GM12878 (cell line): ENCODE measurements at regions of chr14 and their contacts with region 1.

Region 1: DNA sequence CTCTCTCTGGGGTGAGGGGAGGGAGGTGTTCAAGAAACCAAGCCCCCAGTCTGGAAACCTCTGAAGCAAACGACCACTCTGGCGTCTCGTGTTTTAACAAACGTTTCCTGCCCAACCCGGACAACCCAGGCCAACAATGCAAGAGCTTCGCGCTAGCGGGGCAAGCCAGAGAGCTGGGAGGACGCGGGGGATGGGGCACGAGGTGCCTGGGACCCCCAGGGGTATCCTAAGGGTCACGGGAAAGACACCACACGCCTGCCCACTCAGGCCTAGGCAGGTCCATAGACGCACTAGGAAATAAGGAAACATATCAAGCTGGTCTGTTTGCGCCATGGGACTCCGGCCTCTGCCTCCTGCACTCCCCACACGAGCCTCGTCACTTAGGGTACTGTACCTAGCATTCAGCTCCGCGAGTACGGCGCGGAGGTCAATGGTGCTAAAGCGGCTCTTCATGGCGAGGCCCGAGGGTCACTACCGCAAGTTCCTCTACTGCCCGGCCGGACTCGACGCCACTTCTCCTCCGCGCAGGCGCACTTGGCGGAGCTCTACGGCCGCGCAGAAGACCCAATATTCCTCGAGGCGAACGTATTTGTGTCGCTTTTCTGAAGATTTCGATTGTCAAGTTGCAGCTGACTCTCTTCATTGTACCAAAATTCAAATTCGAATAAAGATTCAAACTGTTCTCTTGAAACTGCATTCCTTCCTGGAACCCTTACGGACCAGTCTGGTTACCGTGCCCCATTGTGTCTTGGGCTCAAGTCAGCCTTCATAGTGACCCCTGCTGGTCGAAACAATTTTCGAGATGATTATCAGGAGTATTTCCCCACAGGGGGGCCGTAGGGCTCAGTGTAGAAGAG is at the start of gene NEMF:
- DNase-seq: peak; percentile 92
- ATAC-seq: peak; percentile 89
- H3K4me3 ChIP-seq: peak within 1 kb of the TSS; percentile 97
- H3K27ac ChIP-seq: peak within 1 kb of the TSS; percentile 88
- H3K4me1 ChIP-seq: peaks cover 1% of the 10 kb centered on the region; the same call in 1 of the 2 replicates
- H3K27me3 ChIP-seq: no peaks in the 10 kb centered on the region
- CTCF ChIP-seq: peak; percentile 67 to 95 (median 81)
- EP300 ChIP-seq: no peak
- POLR2A ChIP-seq: peak; percentile 89
- RAD21 ChIP-seq: peak; percentile 57
- polyA plus RNA-seq, gene NEMF: 36.8 to 62.6 TPM

Region 2: GRCh38 chr14:49754570-49755097 is 97.9 kb before region 1 on chr14:
- CTCF ChIA-PET with region 1: no interaction called
- POLR2A ChIA-PET with region 1: no interaction called
- RAD21 ChIA-PET with region 1: no interaction called
- SMC1A ChIA-PET with region 1: no interaction called
- in situ Hi-C with region 1: no loop called
- intact Hi-C with region 1: no loop called
- DNase-seq: no peak
- ATAC-seq: no peak
- H3K4me3 ChIP-seq: no peak overlapping the region
- H3K27ac ChIP-seq: no peak overlapping the region
- H3K4me1 ChIP-seq: no peaks in the 10 kb centered on the region
- H3K27me3 ChIP-seq: no peaks in the 10 kb centered on the region
- CTCF ChIP-seq: no peak
- EP300 ChIP-seq: no peak
- POLR2A ChIP-seq: no peak
- RAD21 ChIP-seq: no peak

Region 3: GRCh38 chr14:49828640-49829039 is 23.9 kb before region 1 on chr14:
- CTCF ChIA-PET with region 1: interaction called, 11 read pairs
- POLR2A ChIA-PET with region 1: no interaction called
- RAD21 ChIA-PET with region 1: no interaction called
- SMC1A ChIA-PET with region 1: interaction called, 13 read pairs
- in situ Hi-C with region 1: no loop called
- intact Hi-C with region 1: no loop called
- DNase-seq: no peak
- ATAC-seq: no peak
- H3K4me3 ChIP-seq: no peak overlapping the region
- H3K27ac ChIP-seq: no peak overlapping the region
- H3K4me1 ChIP-seq: no peaks in the 10 kb centered on the region
- H3K27me3 ChIP-seq: no peaks in the 10 kb centered on the region
- CTCF ChIP-seq: no peak
- EP300 ChIP-seq: no peak
- POLR2A ChIP-seq: no peak
- RAD21 ChIP-seq: no peak

Region 4: GRCh38 chr14:50008562-50009350 is 156.2 kb after region 1 on chr14:
- CTCF ChIA-PET with region 1: interaction called, 7 read pairs
- POLR2A ChIA-PET with region 1: interaction called, 10 read pairs
- RAD21 ChIA-PET with region 1: interaction called, 3 read pairs
- SMC1A ChIA-PET with region 1: no interaction called
- in situ Hi-C with region 1: no loop called
- intact Hi-C with region 1: no loop called
- DNase-seq: no peak
- ATAC-seq: peak; percentile 60
- H3K4me3 ChIP-seq: no peak overlapping the region
- H3K27ac ChIP-seq: no peak overlapping the region
- H3K4me1 ChIP-seq: peaks cover 14% of the 10 kb centered on the region
- H3K27me3 ChIP-seq: no peaks in the 10 kb centered on the region
- CTCF ChIP-seq: no peak
- EP300 ChIP-seq: no peak
- POLR2A ChIP-seq: no peak
- RAD21 ChIP-seq: no peak

Region 5: GRCh38 chr14:50030036-50030435 is 177.5 kb after region 1 on chr14:
- CTCF ChIA-PET with region 1: no interaction called
- POLR2A ChIA-PET with region 1: no interaction called
- RAD21 ChIA-PET with region 1: no interaction called
- SMC1A ChIA-PET with region 1: no interaction called
- in situ Hi-C with region 1: no loop called
- intact Hi-C with region 1: no loop called
- DNase-seq: no peak
- ATAC-seq: no peak
- H3K4me3 ChIP-seq: no peak overlapping the region
- H3K27ac ChIP-seq: no peak overlapping the region
- H3K4me1 ChIP-seq: peaks cover 5% of the 10 kb centered on the region; the same call in 1 of the 2 replicates
- H3K27me3 ChIP-seq: no peaks in the 10 kb centered on the region
- CTCF ChIP-seq: no peak
- EP300 ChIP-seq: no peak
- POLR2A ChIP-seq: no peak
- RAD21 ChIP-seq: no peak

Region 6: GRCh38 chr14:50045039-50045711 is 192.6 kb after region 1 on chr14:
- CTCF ChIA-PET with region 1: no interaction called
- POLR2A ChIA-PET with region 1: no interaction called
- RAD21 ChIA-PET with region 1: no interaction called
- SMC1A ChIA-PET with region 1: no interaction called
- in situ Hi-C with region 1: no loop called
- intact Hi-C with region 1: no loop called
- DNase-seq: peak; percentile 54
- ATAC-seq: peak; percentile 90
- H3K4me3 ChIP-seq: no peak overlapping the region
- H3K27ac ChIP-seq: peak overlapping the region; percentile 50
- H3K4me1 ChIP-seq: peaks cover 42% of the 10 kb centered on the region
- H3K27me3 ChIP-seq: no peaks in the 10 kb centered on the region
- CTCF ChIP-seq: no peak
- EP300 ChIP-seq: no peak
- POLR2A ChIP-seq: peak; percentile 55; the same call in 1 of the 2 replicates
- RAD21 ChIP-seq: peak; percentile 9; the same call in 1 of the 2 replicates

Region 7: GRCh38 chr14:50099335-50099734 is 246.8 kb after region 1 on chr14:
- CTCF ChIA-PET with region 1: interaction called, 69 read pairs
- POLR2A ChIA-PET with region 1: interaction called, 4 read pairs
- RAD21 ChIA-PET with region 1: interaction called, 24 read pairs
- SMC1A ChIA-PET with region 1: interaction called, 33 read pairs
- in situ Hi-C with region 1: no loop called
- intact Hi-C with region 1: loop called (anchors 2 kb)
- DNase-seq: no peak
- ATAC-seq: no peak
- H3K4me3 ChIP-seq: no peak overlapping the region
- H3K27ac ChIP-seq: no peak overlapping the region
- H3K4me1 ChIP-seq: peaks cover 12% of the 10 kb centered on the region
- H3K27me3 ChIP-seq: no peaks in the 10 kb centered on the region
- CTCF ChIP-seq: no peak
- EP300 ChIP-seq: no peak
- POLR2A ChIP-seq: no peak
- RAD21 ChIP-seq: no peak

Region 8: DNA sequence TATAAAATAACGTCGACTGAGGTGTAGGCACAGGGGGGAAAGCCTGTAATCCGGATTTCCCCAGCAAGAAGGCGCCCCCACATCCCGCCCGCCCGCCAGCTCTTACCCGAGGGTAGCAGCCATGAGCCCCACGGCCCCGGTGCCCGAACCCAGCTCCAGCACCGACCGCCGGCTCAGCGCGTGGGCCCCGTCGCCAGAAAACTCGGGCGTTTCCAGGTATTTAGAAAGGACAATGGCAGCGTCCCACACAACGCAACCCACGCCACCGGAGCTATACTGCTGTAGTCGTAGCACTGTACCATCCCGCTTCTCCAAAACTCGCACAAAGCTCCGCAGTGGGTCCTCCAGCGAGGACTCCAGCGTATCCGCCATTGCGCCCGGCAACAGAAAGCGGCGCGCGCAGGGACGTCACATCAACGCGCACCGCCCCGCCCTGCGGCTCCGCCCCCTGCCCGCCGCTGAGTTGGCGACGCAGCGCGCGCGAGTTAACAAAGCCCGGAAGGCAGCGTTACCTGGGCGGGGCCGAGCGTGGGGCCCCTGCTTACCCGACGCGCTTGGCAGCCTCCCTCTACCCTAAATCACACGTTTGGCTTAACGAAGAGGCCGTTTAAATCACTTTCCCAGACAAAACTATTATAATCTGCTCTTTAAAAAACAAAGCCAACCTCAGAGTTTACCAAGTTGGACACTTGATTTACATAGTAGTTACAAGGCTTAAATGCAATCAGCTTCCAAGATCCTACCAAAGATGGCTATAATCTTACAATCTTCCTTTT is 263.8 kb after region 1 on chr14 and contains the start of gene VCPKMT:
- CTCF ChIA-PET with region 1: interaction called, 6 read pairs
- POLR2A ChIA-PET with region 1: interaction called, 6 read pairs
- RAD21 ChIA-PET with region 1: interaction called, 10 read pairs
- SMC1A ChIA-PET with region 1: interaction called, 16 read pairs
- in situ Hi-C with region 1: no loop called
- intact Hi-C with region 1: no loop called
- DNase-seq: peak; percentile 62
- ATAC-seq: peak; percentile 97
- H3K4me3 ChIP-seq: peak within 1 kb of the TSS; percentile 76
- H3K27ac ChIP-seq: peak within 1 kb of the TSS; percentile 84
- H3K4me1 ChIP-seq: peaks cover 8% of the 10 kb centered on the region
- H3K27me3 ChIP-seq: no peaks in the 10 kb centered on the region
- CTCF ChIP-seq: no peak
- EP300 ChIP-seq: 0 out of 4 replicates have a peak, but pooled peaks of 1 of the 2 experiments have one; percentile 13
- POLR2A ChIP-seq: peak; percentile 93
- RAD21 ChIP-seq: no peak
- polyA plus RNA-seq, gene VCPKMT: 8.5 to 11.5 TPM

Region 9: DNA sequence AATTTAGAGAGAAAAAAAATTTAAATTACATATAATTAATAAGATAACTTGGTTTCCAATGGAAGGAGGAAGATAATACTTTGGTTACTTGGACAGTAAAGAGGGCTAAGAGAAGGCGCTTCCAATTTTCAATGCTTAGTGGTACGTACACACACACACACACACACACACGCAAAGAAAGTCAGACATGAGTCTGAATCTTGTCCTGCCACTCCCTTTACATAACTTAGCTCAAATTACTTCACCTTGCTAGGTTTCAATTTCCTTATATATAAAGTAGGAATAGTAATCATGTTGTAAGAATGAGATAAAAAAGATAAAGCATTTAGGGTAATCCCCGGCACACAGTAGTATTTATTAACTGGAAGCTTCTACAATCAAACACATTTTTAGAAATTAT is 303.6 kb after region 1 on chr14:
- CTCF ChIA-PET with region 1: no interaction called
- POLR2A ChIA-PET with region 1: no interaction called
- RAD21 ChIA-PET with region 1: no interaction called
- SMC1A ChIA-PET with region 1: no interaction called
- in situ Hi-C with region 1: no loop called
- intact Hi-C with region 1: no loop called
- DNase-seq: no peak
- ATAC-seq: no peak
- H3K4me3 ChIP-seq: no peak overlapping the region
- H3K27ac ChIP-seq: no peak overlapping the region
- H3K4me1 ChIP-seq: no peaks in the 10 kb centered on the region
- H3K27me3 ChIP-seq: no peaks in the 10 kb centered on the region
- CTCF ChIP-seq: no peak
- EP300 ChIP-seq: no peak
- POLR2A ChIP-seq: no peak
- RAD21 ChIP-seq: no peak